GM12878 (cell line): ENCODE measurements at regions of chr12 and their contacts with region 1.

Region 1: GRCh38 chr12:110449799-110450497 is at the start of gene ARPC3:
- DNase-seq: peak; percentile 77
- ATAC-seq: peak; percentile 98
- H3K4me3 ChIP-seq: peak within 1 kb of the TSS; percentile 97
- H3K27ac ChIP-seq: peak within 1 kb of the TSS; percentile 82
- H3K4me1 ChIP-seq: peaks cover 4% of the 10 kb centered on the region
- H3K27me3 ChIP-seq: no peaks in the 10 kb centered on the region
- CTCF ChIP-seq: peak; percentile 92 to 99 (median 94)
- EP300 ChIP-seq: no peak
- POLR2A ChIP-seq: peak; percentile 90
- RAD21 ChIP-seq: peak; percentile 93
- polyA plus RNA-seq, gene ARPC3: 635 to 890 TPM

Region 2: GRCh38 chr12:110349531-110350151 is 100.3 kb before region 1 on chr12:
- CTCF ChIA-PET with region 1: no interaction called
- POLR2A ChIA-PET with region 1: no interaction called
- RAD21 ChIA-PET with region 1: no interaction called
- SMC1A ChIA-PET with region 1: no interaction called
- in situ Hi-C with region 1: no loop called
- intact Hi-C with region 1: no loop called
- DNase-seq: no peak
- ATAC-seq: peak; percentile 44
- H3K4me3 ChIP-seq: no peak overlapping the region
- H3K27ac ChIP-seq: no peak overlapping the region
- H3K4me1 ChIP-seq: no peaks in the 10 kb centered on the region; the same call in 1 of the 2 replicates
- H3K27me3 ChIP-seq: no peaks in the 10 kb centered on the region
- CTCF ChIP-seq: no peak
- EP300 ChIP-seq: no peak
- POLR2A ChIP-seq: peak; percentile 81
- RAD21 ChIP-seq: no peak

Region 3: GRCh38 chr12:110431957-110432587 is 17.9 kb before region 1 on chr12:
- CTCF ChIA-PET with region 1: interaction called, 32 read pairs
- POLR2A ChIA-PET with region 1: interaction called, 6 read pairs
- RAD21 ChIA-PET with region 1: interaction called, 19 read pairs
- SMC1A ChIA-PET with region 1: interaction called, 6 read pairs
- in situ Hi-C with region 1: no loop called
- intact Hi-C with region 1: no loop called
- DNase-seq: no peak
- ATAC-seq: peak; percentile 38; the same call in 1 of the 3 replicates
- H3K4me3 ChIP-seq: no peak overlapping the region
- H3K27ac ChIP-seq: no peak overlapping the region
- H3K4me1 ChIP-seq: peaks cover 5% of the 10 kb centered on the region
- H3K27me3 ChIP-seq: no peaks in the 10 kb centered on the region
- CTCF ChIP-seq: no peak
- EP300 ChIP-seq: no peak
- POLR2A ChIP-seq: no peak
- RAD21 ChIP-seq: no peak

Region 4: GRCh38 chr12:110508071-110508586 is 58.2 kb after region 1 on chr12:
- CTCF ChIA-PET with region 1: interaction called, 24 read pairs
- POLR2A ChIA-PET with region 1: interaction called, 7 read pairs
- RAD21 ChIA-PET with region 1: interaction called, 21 read pairs
- SMC1A ChIA-PET with region 1: interaction called, 15 read pairs
- in situ Hi-C with region 1: no loop called
- intact Hi-C with region 1: no loop called
- DNase-seq: no peak
- ATAC-seq: no peak
- H3K4me3 ChIP-seq: no peak overlapping the region
- H3K27ac ChIP-seq: no peak overlapping the region
- H3K4me1 ChIP-seq: no peaks in the 10 kb centered on the region; the same call in 1 of the 2 replicates
- H3K27me3 ChIP-seq: no peaks in the 10 kb centered on the region
- CTCF ChIP-seq: no peak
- EP300 ChIP-seq: no peak
- POLR2A ChIP-seq: no peak
- RAD21 ChIP-seq: no peak

Region 5: GRCh38 chr12:110543252-110543959 is 93.5 kb after region 1 on chr12:
- CTCF ChIA-PET with region 1: interaction called, 6 read pairs
- POLR2A ChIA-PET with region 1: interaction called, 4 read pairs
- RAD21 ChIA-PET with region 1: interaction called, 13 read pairs
- SMC1A ChIA-PET with region 1: interaction called, 4 read pairs
- in situ Hi-C with region 1: no loop called
- intact Hi-C with region 1: no loop called
- DNase-seq: peak; percentile 90
- ATAC-seq: peak; percentile 92
- H3K4me3 ChIP-seq: no peak overlapping the region; the same call in 1 of the 2 replicates
- H3K27ac ChIP-seq: peak overlapping the region; percentile 94
- H3K4me1 ChIP-seq: peaks cover 28% of the 10 kb centered on the region
- H3K27me3 ChIP-seq: no peaks in the 10 kb centered on the region
- CTCF ChIP-seq: no peak
- EP300 ChIP-seq: peak in 1 of 2 experiments; percentile 53; a peak in 1 of 4 replicates
- POLR2A ChIP-seq: 0 out of 2 replicates have a peak, but pooled peaks have one; percentile 26
- RAD21 ChIP-seq: no peak

Region 6: DNA sequence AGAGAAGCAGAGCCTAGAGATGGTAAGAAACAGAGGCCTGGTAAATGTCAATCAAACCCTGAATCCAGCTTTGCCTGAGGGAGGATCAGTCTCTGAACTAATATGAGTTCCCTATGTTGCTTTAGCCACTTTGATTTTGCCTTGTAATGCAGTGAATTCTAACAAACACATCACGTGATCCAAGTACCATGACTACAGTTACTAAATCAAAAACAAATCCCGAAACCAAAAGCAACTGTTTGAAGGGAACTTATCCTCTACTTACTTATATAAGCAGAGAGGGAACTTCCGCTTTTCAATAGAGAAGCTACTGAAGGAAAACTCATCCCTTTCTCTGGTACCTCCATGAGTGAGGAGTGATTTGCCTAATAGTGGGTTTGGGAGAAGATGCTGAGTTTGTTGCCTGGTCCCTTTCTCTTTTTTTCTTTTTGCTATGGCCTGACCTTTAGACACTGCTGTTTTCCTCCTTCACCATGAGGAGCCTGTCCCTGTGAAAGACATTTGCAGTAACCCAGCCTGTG is 140.9 kb after region 1 on chr12:
- CTCF ChIA-PET with region 1: interaction called, 15 read pairs
- POLR2A ChIA-PET with region 1: interaction called, 3 read pairs
- RAD21 ChIA-PET with region 1: interaction called, 11 read pairs
- SMC1A ChIA-PET with region 1: interaction called, 8 read pairs
- in situ Hi-C with region 1: no loop called
- intact Hi-C with region 1: no loop called
- DNase-seq: peak; percentile 79
- ATAC-seq: peak; percentile 93
- H3K4me3 ChIP-seq: peak overlapping the region; percentile 42; the same call in 1 of the 2 replicates
- H3K27ac ChIP-seq: peak overlapping the region; percentile 85
- H3K4me1 ChIP-seq: peaks cover 15% of the 10 kb centered on the region
- H3K27me3 ChIP-seq: no peaks in the 10 kb centered on the region
- CTCF ChIP-seq: no peak
- EP300 ChIP-seq: peak in 1 of 2 experiments; percentile 81; a peak in 2 of 4 replicates
- POLR2A ChIP-seq: no peak
- RAD21 ChIP-seq: no peak

Region 7: DNA sequence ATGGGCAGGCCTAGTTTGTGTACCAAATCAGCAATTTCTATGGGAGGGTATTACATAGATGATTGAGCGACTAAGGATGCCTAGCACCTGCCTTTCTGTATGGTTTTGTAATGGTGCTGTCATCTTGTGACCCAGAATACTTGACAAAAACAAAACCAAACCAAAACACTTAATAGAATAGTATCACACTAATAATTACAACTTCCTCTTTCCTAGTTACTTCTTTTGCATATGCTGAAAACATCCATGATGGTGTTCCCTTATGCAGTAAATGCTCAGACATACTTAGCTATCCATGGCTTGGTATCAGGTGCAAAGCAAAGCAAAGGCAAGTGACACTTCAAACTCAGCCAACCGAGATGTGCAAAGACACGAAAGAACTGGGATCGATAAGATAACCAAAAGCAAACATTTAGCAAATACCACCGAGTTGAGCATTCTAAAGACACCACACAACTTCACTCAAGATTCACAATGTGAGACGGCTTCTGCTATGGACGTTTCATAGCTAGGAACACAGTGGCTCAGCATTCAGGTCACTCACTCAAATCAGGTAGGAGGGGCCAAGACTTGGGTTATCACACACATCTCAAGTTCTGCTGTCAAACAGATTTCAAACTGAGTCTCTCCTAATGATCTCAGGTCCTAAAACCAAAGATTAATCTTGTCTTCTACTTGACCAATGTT is 268.4 kb after region 1 on chr12:
- CTCF ChIA-PET with region 1: no interaction called
- POLR2A ChIA-PET with region 1: no interaction called
- RAD21 ChIA-PET with region 1: no interaction called
- SMC1A ChIA-PET with region 1: no interaction called
- in situ Hi-C with region 1: no loop called
- intact Hi-C with region 1: no loop called
- DNase-seq: no peak
- ATAC-seq: peak; percentile 83
- H3K4me3 ChIP-seq: no peak overlapping the region
- H3K27ac ChIP-seq: no peak overlapping the region
- H3K4me1 ChIP-seq: peaks cover 3% of the 10 kb centered on the region; the same call in 1 of the 2 replicates
- H3K27me3 ChIP-seq: no peaks in the 10 kb centered on the region
- CTCF ChIP-seq: no peak
- EP300 ChIP-seq: 0 out of 4 replicates have a peak, but pooled peaks of 1 of the 2 experiments have one; percentile 11
- POLR2A ChIP-seq: no peak
- RAD21 ChIP-seq: no peak

Region 8: GRCh38 chr12:110826592-110827200 is 376.7 kb after region 1 on chr12:
- CTCF ChIA-PET with region 1: interaction called, 10 read pairs
- POLR2A ChIA-PET with region 1: no interaction called
- RAD21 ChIA-PET with region 1: no interaction called
- SMC1A ChIA-PET with region 1: interaction called, 4 read pairs
- in situ Hi-C with region 1: no loop called
- intact Hi-C with region 1: loop called (anchors 2 kb)
- DNase-seq: peak; percentile 70
- ATAC-seq: peak; percentile 99
- H3K4me3 ChIP-seq: no peak overlapping the region
- H3K27ac ChIP-seq: no peak overlapping the region
- H3K4me1 ChIP-seq: peaks cover 10% of the 10 kb centered on the region; the same call in 1 of the 2 replicates
- H3K27me3 ChIP-seq: no peaks in the 10 kb centered on the region
- CTCF ChIP-seq: peak; percentile 89 to 99 (median 97)
- EP300 ChIP-seq: no peak
- POLR2A ChIP-seq: no peak
- RAD21 ChIP-seq: peak; percentile 98